CD4-positive, alpha-beta T cell (primary cell): ENCODE measurements at regions of chr2 and their contacts with region 1.

Region 1: GRCh38 chr2:207143215-207144172 is 22.3 kb downstream of the KLF7 start:
- DNase-seq: peak; percentile 35 to 80 (median 60)
- ATAC-seq: peak; percentile 74
- H3K4me3 ChIP-seq: peak overlapping the region; percentile 52
- H3K4me3 Mint-ChIP-seq: peak overlapping the region; percentile 49
- H3K27ac ChIP-seq: peak overlapping the region; percentile 89 to 91
- H3K27ac Mint-ChIP-seq: peak overlapping the region; percentile 89
- H3K4me1 ChIP-seq: peaks cover 43% of the 10 kb centered on the region
- H3K4me1 Mint-ChIP-seq: peaks cover 69% of the 10 kb centered on the region
- H3K27me3 ChIP-seq: no peaks in the 10 kb centered on the region
- H3K27me3 Mint-ChIP-seq: no peaks in the 10 kb centered on the region
- CTCF ChIP-seq: no peak

Region 2: GRCh38 chr2:207073801-207074678 is 69.5 kb before region 1 on chr2:
- CTCF ChIA-PET with region 1: interaction called, 3 read pairs
- POLR2A ChIA-PET with region 1: interaction called, 10 read pairs
- intact Hi-C with region 1: no loop called
- DNase-seq: peak in 6 of 14 experiments; percentile 2 to 49 (median 28)
- ATAC-seq: peak; percentile 52
- H3K4me3 ChIP-seq: no peak overlapping the region
- H3K4me3 Mint-ChIP-seq: no peak overlapping the region
- H3K27ac ChIP-seq: no peak overlapping the region
- H3K27ac Mint-ChIP-seq: peak overlapping the region; percentile 58
- H3K4me1 ChIP-seq: peaks cover 10% of the 10 kb centered on the region
- H3K4me1 Mint-ChIP-seq: peaks cover 33% of the 10 kb centered on the region
- H3K27me3 ChIP-seq: no peaks in the 10 kb centered on the region
- H3K27me3 Mint-ChIP-seq: no peaks in the 10 kb centered on the region
- CTCF ChIP-seq: no peak

Region 3: GRCh38 chr2:207107551-207107950 is 35.9 kb before region 1 on chr2:
- CTCF ChIA-PET with region 1: interaction called, 4 read pairs
- POLR2A ChIA-PET with region 1: interaction called, 11 read pairs
- intact Hi-C with region 1: no loop called
- DNase-seq: peak in 1 of 14 experiments; percentile 21
- ATAC-seq: peak; percentile 56
- H3K4me3 ChIP-seq: no peak overlapping the region
- H3K4me3 Mint-ChIP-seq: no peak overlapping the region
- H3K27ac ChIP-seq: no peak overlapping the region
- H3K27ac Mint-ChIP-seq: peak overlapping the region; percentile 42
- H3K4me1 ChIP-seq: no peaks in the 10 kb centered on the region
- H3K4me1 Mint-ChIP-seq: peaks cover 67% of the 10 kb centered on the region
- H3K27me3 ChIP-seq: no peaks in the 10 kb centered on the region
- H3K27me3 Mint-ChIP-seq: no peaks in the 10 kb centered on the region
- CTCF ChIP-seq: no peak

Region 4: DNA sequence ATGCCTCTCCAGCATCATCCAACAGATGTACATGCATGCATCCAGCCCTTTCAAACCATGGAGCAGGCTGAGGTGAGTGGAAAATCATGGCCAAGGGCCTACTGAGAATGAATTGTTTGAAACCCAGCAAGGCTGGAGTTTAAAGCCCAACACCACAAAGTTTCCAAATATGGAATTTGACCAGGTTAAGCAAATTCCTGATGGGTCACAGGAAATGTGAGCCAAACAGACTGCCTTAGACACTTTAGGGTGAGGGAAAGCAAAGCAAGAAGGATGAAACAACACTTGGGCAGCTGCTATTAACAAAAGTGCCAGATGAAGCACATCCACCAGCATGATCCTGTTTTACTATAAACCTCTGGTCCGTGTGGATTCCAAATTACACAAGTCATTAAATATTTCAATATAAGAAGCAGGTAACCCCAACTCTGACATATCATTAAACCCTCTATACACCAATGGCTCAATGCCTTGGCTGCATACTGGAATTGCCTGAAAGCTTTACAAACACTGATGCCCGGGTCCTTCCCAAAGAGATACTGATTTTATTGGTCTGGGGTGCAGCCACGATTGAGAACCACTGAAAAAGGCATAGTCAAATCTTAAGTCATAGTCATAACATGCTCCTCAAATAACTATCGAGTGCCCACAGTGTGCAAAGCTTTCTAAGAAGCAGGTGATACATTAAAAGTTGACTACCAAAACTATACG is 13.1 kb after region 1 on chr2:
- CTCF ChIA-PET with region 1: interaction called, 11 read pairs
- POLR2A ChIA-PET with region 1: interaction called, 463 read pairs
- intact Hi-C with region 1: loop called (anchors 1 to 2 kb)
- DNase-seq: no peak
- ATAC-seq: peak; percentile 21
- H3K4me3 ChIP-seq: no peak overlapping the region
- H3K4me3 Mint-ChIP-seq: peak overlapping the region; percentile 74
- H3K27ac ChIP-seq: no peak overlapping the region
- H3K27ac Mint-ChIP-seq: peak overlapping the region; percentile 77
- H3K4me1 ChIP-seq: peaks cover 28% of the 10 kb centered on the region
- H3K4me1 Mint-ChIP-seq: peaks cover 97% of the 10 kb centered on the region
- H3K27me3 ChIP-seq: no peaks in the 10 kb centered on the region
- H3K27me3 Mint-ChIP-seq: no peaks in the 10 kb centered on the region
- CTCF ChIP-seq: no peak